Activated B cell treated with CpG ODN at 0.5 μM for 24 hours (primary cell): ENCODE measurements at regions of chr19 and their contacts with region 1.

Region 1: DNA sequence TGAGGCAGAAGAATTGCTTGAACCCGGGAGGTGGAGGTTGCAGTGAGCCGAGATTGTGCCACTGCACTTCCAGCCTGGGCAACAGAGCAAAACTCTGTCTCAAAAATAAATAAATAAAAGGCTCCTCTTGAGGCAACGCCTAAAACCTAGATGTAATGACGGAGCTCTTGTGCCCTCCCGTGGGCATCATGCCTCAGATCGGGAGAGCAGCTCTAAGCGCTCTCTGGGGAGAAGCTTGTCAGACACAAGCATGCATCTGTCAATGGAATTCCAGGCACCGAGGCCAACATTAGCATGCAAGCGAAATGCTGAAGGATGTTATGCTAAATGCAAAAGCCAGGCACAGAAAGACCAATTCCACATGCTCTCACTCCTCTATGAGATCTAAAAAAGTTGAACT is 45.6 kb upstream of the MRI1 start:
- DNase-seq: no peak
- ATAC-seq: no peak
- H3K4me3 Mint-ChIP-seq: no peak overlapping the region
- H3K27ac Mint-ChIP-seq: no peak overlapping the region
- H3K4me1 Mint-ChIP-seq: no peaks in the 10 kb centered on the region
- H3K27me3 Mint-ChIP-seq: peaks cover 6% of the 10 kb centered on the region
- CTCF ChIP-seq: no peak

Region 2: DNA sequence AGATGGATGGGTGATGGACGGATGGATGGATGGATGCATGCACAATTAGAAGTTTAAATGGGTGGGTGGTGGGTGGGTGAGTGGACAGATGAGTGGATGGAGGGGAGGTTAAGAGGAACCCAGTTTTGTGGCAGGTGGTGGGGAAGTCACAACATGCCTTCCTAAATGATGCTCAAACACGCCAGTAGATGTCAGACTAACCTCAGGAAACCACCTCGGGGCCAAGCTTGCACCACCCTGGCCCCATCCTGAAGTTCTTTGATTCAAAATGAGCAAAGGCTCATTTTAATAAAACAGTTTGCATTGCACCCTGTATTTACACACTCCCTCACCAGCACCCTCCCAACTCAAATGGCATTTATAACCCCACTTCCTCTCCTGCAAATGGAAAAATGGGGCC is 121.1 kb before region 1 on chr19:
- CTCF ChIA-PET with region 1: interaction called, 10 read pairs
- POLR2A ChIA-PET with region 1: no interaction called
- intact Hi-C with region 1: loop called (anchors 1 kb)
- DNase-seq: no peak
- ATAC-seq: peak; percentile 95
- H3K4me3 Mint-ChIP-seq: no peak overlapping the region
- H3K27ac Mint-ChIP-seq: no peak overlapping the region
- H3K4me1 Mint-ChIP-seq: peaks cover 5% of the 10 kb centered on the region
- H3K27me3 Mint-ChIP-seq: peaks cover 11% of the 10 kb centered on the region
- CTCF ChIP-seq: no peak